HCT116 (cell line): ENCODE measurements at regions of chr18 and their contacts with region 1.

Region 1: GRCh38 chr18:45839414-45840395 is 14.2 kb downstream of the SIGLEC15 start:
- DNase-seq: peak; percentile 10
- ATAC-seq: peak; percentile 79
- H3K4me3 ChIP-seq: no peak overlapping the region
- H3K27ac ChIP-seq: no peak overlapping the region
- H3K4me1 ChIP-seq: no peaks in the 10 kb centered on the region
- H3K27me3 ChIP-seq: no peaks in the 10 kb centered on the region
- CTCF ChIP-seq: peak; percentile 48 to 59 (median 59); a peak in 5 of 6 replicates
- POLR2A ChIP-seq: no peak
- RAD21 ChIP-seq: peak; percentile 68

Region 2: DNA sequence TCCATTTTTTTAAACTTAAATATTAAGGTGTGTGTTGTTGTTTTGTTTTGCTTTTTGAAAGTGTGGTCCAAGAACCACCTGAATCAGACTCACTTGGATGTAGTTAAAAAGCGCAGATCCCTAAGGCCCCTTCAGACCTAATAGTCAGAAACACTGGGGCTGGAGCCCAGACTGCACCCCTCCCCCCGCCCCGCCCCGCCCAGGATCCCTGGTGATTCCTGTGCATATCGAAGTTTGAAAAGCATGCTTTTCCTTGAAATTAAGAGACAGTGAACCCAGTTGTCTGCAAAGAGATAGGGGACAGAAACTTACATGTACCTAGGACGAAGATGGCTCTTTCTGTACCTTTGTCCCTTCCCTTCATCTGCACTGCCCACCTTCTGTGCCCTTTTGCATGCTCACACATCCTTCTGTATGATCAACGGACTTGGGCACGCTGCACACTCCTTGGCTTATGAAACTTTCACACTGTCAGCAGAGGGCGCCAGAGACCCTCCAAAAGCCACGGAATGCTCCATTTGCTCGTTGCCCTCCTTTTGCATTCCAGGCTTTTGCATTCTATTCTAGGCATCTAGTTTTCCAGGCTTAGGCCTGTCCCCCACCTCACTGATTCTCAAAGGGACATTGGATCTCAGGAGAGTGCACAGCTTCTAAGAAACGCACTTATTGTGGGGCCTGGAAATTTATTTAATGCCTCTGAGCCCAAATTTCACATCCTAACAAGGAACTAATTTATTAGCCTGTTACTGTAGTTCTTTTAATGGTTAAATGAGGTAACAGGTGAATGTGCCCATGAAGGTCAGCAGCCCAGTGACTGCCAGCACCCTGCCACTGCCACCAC is 148.5 kb before region 1 on chr18:
- CTCF ChIA-PET with region 1: no interaction called
- POLR2A ChIA-PET with region 1: no interaction called
- RAD21 ChIA-PET with region 1: no interaction called
- intact Hi-C with region 1: loop called (anchors 1 kb)
- DNase-seq: peak; percentile 62
- ATAC-seq: peak; percentile 98
- H3K4me3 ChIP-seq: no peak overlapping the region
- H3K27ac ChIP-seq: no peak overlapping the region
- H3K4me1 ChIP-seq: peaks cover 0 to 5% of the 10 kb centered on the region in 2 experiments; a peak in 1 of 4 replicates
- H3K27me3 ChIP-seq: no peaks in the 10 kb centered on the region
- CTCF ChIP-seq: peak; percentile 79 to 91 (median 84)
- POLR2A ChIP-seq: no peak
- RAD21 ChIP-seq: peak; percentile 93

Region 3: DNA sequence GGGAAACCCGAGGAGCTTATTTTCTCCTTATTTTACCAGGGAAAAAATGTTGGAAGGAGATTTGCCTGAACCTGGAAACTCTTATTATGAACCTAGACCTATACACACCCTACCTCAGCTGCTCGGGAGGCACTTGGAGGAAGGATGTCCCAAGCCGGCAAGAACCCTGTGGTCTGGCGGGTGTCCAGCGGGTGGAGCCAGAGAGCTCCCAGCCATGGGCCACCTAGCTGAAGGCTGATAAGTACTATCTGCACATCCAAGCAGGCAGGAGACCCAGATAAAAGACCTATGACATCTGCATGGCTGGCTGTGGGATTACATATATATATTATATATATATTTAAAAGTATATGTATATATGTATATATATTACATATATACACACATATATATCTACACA is 116.8 kb before region 1 on chr18:
- CTCF ChIA-PET with region 1: interaction called, 5 read pairs
- POLR2A ChIA-PET with region 1: no interaction called
- RAD21 ChIA-PET with region 1: interaction called, 3 to 7 read pairs
- intact Hi-C with region 1: loop called (anchors 1 kb)
- DNase-seq: peak; percentile 57
- ATAC-seq: peak; percentile 100
- H3K4me3 ChIP-seq: no peak overlapping the region
- H3K27ac ChIP-seq: no peak overlapping the region
- H3K4me1 ChIP-seq: no peaks in the 10 kb centered on the region
- H3K27me3 ChIP-seq: 0 out of 2 replicates have a peak, but pooled peaks cover 6% of the 10 kb centered on the region
- CTCF ChIP-seq: peak; percentile 74 to 94 (median 78)
- POLR2A ChIP-seq: no peak
- RAD21 ChIP-seq: peak; percentile 82

Region 4: DNA sequence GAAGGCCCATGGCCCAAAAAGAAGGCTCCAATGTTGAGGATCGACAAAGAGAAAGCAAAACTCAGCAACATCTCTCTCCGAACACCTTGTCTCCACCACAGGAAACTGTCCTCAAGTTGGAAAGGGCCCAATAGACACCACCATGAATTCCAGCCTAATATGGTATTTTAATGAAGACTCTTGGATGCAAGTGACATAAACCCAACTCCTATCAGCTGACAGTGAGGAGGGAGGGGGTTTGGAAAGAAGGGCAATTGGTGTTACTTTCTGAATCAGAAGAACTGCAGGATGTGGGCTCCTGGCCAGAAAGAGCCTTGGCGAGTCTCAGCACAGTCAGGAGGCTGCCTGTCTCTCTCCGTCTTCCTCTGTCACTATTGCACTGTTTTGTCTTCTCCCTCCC is 54.6 kb before region 1 on chr18:
- CTCF ChIA-PET with region 1: no interaction called
- POLR2A ChIA-PET with region 1: no interaction called
- RAD21 ChIA-PET with region 1: no interaction called
- intact Hi-C with region 1: no loop called
- DNase-seq: no peak
- ATAC-seq: no peak
- H3K4me3 ChIP-seq: no peak overlapping the region
- H3K27ac ChIP-seq: no peak overlapping the region
- H3K4me1 ChIP-seq: peaks cover 0 to 13% of the 10 kb centered on the region in 2 experiments; a peak in 2 of 4 replicates
- H3K27me3 ChIP-seq: no peaks in the 10 kb centered on the region
- CTCF ChIP-seq: no peak
- POLR2A ChIP-seq: no peak
- RAD21 ChIP-seq: no peak

Region 5: GRCh38 chr18:45856531-45856930 is 16.8 kb after region 1 on chr18:
- CTCF ChIA-PET with region 1: no interaction called
- POLR2A ChIA-PET with region 1: no interaction called
- RAD21 ChIA-PET with region 1: no interaction called
- intact Hi-C with region 1: no loop called
- DNase-seq: no peak
- ATAC-seq: no peak
- H3K4me3 ChIP-seq: no peak overlapping the region
- H3K27ac ChIP-seq: no peak overlapping the region
- H3K4me1 ChIP-seq: no peaks in the 10 kb centered on the region
- H3K27me3 ChIP-seq: no peaks in the 10 kb centered on the region
- CTCF ChIP-seq: no peak
- POLR2A ChIP-seq: no peak
- RAD21 ChIP-seq: no peak